Stomach (tissue), 19 donors: ENCODE measurements at regions of chr1 and their contacts with region 1.

Region 1: GRCh38 chr1:74222709-74223108 is 12.5 kb upstream of the TNNI3K start:
- DNase-seq: peak in 1 of 2 donors; percentile 23
- H3K4me3 ChIP-seq: no peak overlapping the region
- H3K27ac ChIP-seq: no peak overlapping the region
- H3K4me1 ChIP-seq: no peaks in the 10 kb centered on the region
- H3K27me3 ChIP-seq: no peaks in the 10 kb centered on the region
- CTCF ChIP-seq: no peak
- EP300 ChIP-seq: no peak
- POLR2A ChIP-seq: no peak

Region 2: DNA sequence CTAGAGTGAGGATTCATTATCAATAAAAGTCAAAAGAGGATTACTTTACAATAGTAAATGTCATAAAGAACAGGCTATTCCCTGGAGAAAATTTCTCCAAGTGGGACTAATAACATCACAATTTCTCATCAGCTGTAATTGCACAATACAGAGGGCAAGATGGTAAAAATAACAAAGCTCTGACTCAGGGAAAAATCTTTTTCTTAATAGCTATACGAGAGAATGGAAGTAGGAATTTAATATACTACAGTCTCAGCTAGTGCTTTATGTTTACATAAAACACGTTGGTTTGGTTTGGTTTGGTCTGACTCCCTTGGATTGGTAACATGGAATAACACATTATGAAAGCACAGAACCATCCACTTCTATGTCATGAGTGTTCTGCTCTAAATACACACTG is 422.3 kb before region 1 on chr1:
- intact Hi-C with region 1: no loop called
- DNase-seq: no peak
- H3K4me3 ChIP-seq: no peak overlapping the region
- H3K27ac ChIP-seq: no peak overlapping the region
- H3K4me1 ChIP-seq: no peaks in the 10 kb centered on the region
- H3K27me3 ChIP-seq: no peaks in the 10 kb centered on the region
- CTCF ChIP-seq: no peak
- EP300 ChIP-seq: no peak
- POLR2A ChIP-seq: no peak

Region 3: DNA sequence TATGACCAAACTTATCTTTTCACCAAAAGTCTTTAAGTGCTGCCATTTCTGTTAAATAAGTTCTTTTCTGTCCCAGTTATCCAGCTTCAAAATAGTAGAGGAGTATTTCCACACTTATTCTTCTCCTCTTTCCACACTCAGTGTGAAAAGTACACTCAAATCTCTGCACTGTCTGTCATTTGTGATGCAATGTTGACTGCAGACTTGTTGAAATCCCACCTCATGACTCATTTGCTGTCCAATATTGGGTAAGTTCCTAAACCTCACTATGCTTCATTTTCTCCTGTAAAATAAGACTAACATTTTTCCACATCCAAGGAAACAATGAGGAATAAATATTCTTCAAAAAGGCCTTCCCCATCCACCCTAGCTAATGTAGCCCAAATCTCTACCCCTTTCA is 42.2 kb before region 1 on chr1:
- intact Hi-C with region 1: loop called (anchors 10 kb)
- DNase-seq: no peak
- H3K4me3 ChIP-seq: no peak overlapping the region
- H3K27ac ChIP-seq: no peak overlapping the region
- H3K4me1 ChIP-seq: no peaks in the 10 kb centered on the region
- H3K27me3 ChIP-seq: no peaks in the 10 kb centered on the region
- CTCF ChIP-seq: no peak
- EP300 ChIP-seq: no peak
- POLR2A ChIP-seq: no peak

Region 4: DNA sequence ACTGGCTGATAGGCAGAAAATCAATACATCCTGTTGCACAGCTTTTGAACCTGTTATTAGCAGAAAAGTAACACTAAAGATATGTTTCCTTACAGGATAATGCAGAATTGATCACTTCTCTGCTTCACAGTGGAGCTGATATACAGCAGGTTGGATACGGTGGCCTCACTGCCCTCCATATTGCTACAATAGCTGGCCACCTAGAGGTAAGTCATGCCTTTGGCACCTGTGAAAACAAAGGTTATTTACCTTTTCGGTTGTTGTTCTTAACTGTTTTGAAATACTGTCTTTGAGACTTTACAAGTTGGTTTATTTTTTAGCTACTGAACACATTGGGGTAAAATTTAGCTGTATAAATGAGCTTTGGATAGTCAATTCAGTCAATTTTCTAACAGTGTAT is 48.8 kb after region 1 on chr1:
- intact Hi-C with region 1: no loop called
- DNase-seq: no peak
- H3K4me3 ChIP-seq: no peak overlapping the region
- H3K27ac ChIP-seq: no peak overlapping the region
- H3K4me1 ChIP-seq: no peaks in the 10 kb centered on the region
- H3K27me3 ChIP-seq: no peaks in the 10 kb centered on the region
- CTCF ChIP-seq: no peak
- EP300 ChIP-seq: no peak
- POLR2A ChIP-seq: no peak